T47D (cell line): ENCODE measurements at regions of chr17 and their contacts with region 1.

Region 1: GRCh38 chr17:64306850-64307463 is 43.9 kb upstream of the TEX2 start:
- DNase-seq: peak; percentile 59 to 80

Region 2: DNA sequence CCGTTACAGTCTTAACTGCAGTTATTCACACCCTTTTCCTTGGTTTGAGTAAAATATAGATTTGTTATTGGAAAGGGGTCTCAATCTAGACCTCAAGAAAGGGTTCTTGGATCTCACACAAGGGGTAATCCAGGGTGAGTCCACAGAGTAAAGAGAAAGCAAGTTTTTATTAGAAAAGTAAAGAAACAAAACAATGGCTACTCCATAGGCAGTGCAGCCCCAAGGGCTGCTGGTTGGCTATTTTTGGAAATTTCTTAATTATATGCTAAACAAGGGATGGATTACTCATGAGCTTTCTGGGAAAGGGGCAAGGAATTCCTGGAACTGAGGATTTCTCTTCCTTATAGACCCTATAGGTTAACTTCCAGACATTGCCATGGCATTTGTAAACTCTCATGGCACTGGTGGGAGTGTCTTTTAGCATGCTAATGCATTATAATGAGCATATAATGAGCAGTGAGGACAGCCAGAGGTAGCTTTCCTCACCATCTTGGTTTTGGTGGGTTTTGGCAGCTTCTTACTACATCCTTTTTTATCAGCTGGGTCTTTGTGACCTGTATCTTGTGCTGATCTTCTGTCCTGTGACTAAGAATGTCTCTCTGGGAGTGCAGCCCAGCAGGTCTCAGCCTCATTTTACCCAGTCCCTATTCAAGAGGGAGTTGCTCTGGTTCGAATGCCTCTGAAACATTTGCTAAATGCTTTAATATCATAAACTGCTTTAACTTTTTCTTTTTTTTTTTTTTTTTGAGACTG is 117.5 kb after region 1 on chr17:
- in situ Hi-C with region 1: loop called (anchors 5 kb)
- DNase-seq: no peak